ENCODE measurements at regions of chr1 and their contacts with region 1.

Region 1: GRCh38 chr1:240455228-240455821 is 156.6 kb downstream of the GREM2 start:
- DNase-seq: peak; percentile 22
- ATAC-seq: peak; percentile 54; the same call in 1 of the 2 replicates
- H3K4me3 ChIP-seq: no peak overlapping the region
- H3K27ac ChIP-seq: no peak overlapping the region
- H3K4me1 ChIP-seq: peaks cover 4% of the 10 kb centered on the region; the same call in 1 of the 2 replicates
- H3K27me3 ChIP-seq: no peaks in the 10 kb centered on the region
- CTCF ChIP-seq: peak; percentile 62
- POLR2A ChIP-seq: no peak
- RAD21 ChIP-seq: peak; percentile 58

Region 2: GRCh38 chr1:240492832-240493440 is 37.6 kb after region 1 on chr1:
- CTCF ChIA-PET with region 1: no interaction called
- POLR2A ChIA-PET with region 1: no interaction called
- dilution Hi-C with region 1: no loop called
- in situ Hi-C with region 1: no loop called
- intact Hi-C with region 1: no loop called
- DNase-seq: peak; percentile 14
- ATAC-seq: 0 out of 2 replicates have a peak, but pooled peaks have one; percentile 7
- H3K4me3 ChIP-seq: no peak overlapping the region
- H3K27ac ChIP-seq: no peak overlapping the region
- H3K4me1 ChIP-seq: peaks cover 3% of the 10 kb centered on the region
- H3K27me3 ChIP-seq: no peaks in the 10 kb centered on the region
- CTCF ChIP-seq: no peak
- POLR2A ChIP-seq: no peak
- RAD21 ChIP-seq: no peak

Region 3: GRCh38 chr1:240582953-240583352 is 127.6 kb after region 1 on chr1:
- CTCF ChIA-PET with region 1: no interaction called
- POLR2A ChIA-PET with region 1: no interaction called
- dilution Hi-C with region 1: no loop called
- in situ Hi-C with region 1: no loop called
- intact Hi-C with region 1: no loop called
- DNase-seq: peak; percentile 30
- ATAC-seq: peak; percentile 49; the same call in 1 of the 2 replicates
- H3K4me3 ChIP-seq: no peak overlapping the region
- H3K27ac ChIP-seq: no peak overlapping the region
- H3K4me1 ChIP-seq: peaks cover 2% of the 10 kb centered on the region
- H3K27me3 ChIP-seq: no peaks in the 10 kb centered on the region
- CTCF ChIP-seq: no peak
- POLR2A ChIP-seq: no peak
- RAD21 ChIP-seq: no peak

Region 4: DNA sequence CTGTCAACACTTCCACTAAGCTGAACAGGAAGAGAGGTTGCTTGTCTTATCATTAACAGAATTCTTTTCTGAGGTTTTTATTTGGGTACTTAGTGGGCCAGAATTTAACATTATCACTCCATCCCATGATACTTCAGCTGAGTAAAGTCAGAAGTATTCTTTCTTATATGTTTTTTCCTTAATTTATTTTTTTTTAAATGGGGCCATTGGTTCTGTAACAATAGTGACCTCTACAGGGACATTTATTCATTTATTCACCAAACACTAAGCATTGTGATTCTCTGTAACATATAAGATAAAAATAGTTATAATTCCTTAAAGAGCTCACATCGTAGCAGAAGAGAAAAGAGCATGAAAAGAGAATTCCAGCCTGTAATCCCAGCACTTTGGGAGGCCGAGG is 146.9 kb after region 1 on chr1:
- CTCF ChIA-PET with region 1: interaction called, 6 read pairs
- POLR2A ChIA-PET with region 1: no interaction called
- dilution Hi-C with region 1: no loop called
- in situ Hi-C with region 1: no loop called
- intact Hi-C with region 1: loop called (anchors 1 kb)
- DNase-seq: peak; percentile 35
- ATAC-seq: peak; percentile 77
- H3K4me3 ChIP-seq: no peak overlapping the region
- H3K27ac ChIP-seq: no peak overlapping the region
- H3K4me1 ChIP-seq: peaks cover 4% of the 10 kb centered on the region; the same call in 1 of the 2 replicates
- H3K27me3 ChIP-seq: no peaks in the 10 kb centered on the region
- CTCF ChIP-seq: peak; percentile 53
- POLR2A ChIP-seq: no peak
- RAD21 ChIP-seq: peak; percentile 48